ENCODE measurements at regions of chr17 and their contacts with region 1.

Region 1: GRCh38 chr17:8156246-8156992 is 4.2 kb upstream of the PER1 start:
- DNase-seq: peak; percentile 100
- H3K4me3 ChIP-seq: peak overlapping the region in 2 of 3 experiments; percentile 24 to 62
- H3K27ac ChIP-seq: peak overlapping the region; percentile 99
- H3K4me1 ChIP-seq: peaks cover 43% of the 10 kb centered on the region
- H3K27me3 ChIP-seq: no peaks in the 10 kb centered on the region
- CTCF ChIP-seq: no peak
- POLR2A ChIP-seq: no peak

Region 2: GRCh38 chr17:7851438-7852256 is 304.8 kb before region 1 on chr17:
- CTCF ChIA-PET with region 1: no interaction called
- POLR2A ChIA-PET with region 1: no interaction called
- dilution Hi-C with region 1: no loop called
- intact Hi-C with region 1: no loop called
- DNase-seq: peak; percentile 88
- H3K4me3 ChIP-seq: no peak overlapping the region
- H3K27ac ChIP-seq: no peak overlapping the region
- H3K4me1 ChIP-seq: peaks cover 20% of the 10 kb centered on the region
- H3K27me3 ChIP-seq: no peaks in the 10 kb centered on the region
- CTCF ChIP-seq: peak; percentile 91 to 98
- POLR2A ChIP-seq: no peak

Region 3: DNA sequence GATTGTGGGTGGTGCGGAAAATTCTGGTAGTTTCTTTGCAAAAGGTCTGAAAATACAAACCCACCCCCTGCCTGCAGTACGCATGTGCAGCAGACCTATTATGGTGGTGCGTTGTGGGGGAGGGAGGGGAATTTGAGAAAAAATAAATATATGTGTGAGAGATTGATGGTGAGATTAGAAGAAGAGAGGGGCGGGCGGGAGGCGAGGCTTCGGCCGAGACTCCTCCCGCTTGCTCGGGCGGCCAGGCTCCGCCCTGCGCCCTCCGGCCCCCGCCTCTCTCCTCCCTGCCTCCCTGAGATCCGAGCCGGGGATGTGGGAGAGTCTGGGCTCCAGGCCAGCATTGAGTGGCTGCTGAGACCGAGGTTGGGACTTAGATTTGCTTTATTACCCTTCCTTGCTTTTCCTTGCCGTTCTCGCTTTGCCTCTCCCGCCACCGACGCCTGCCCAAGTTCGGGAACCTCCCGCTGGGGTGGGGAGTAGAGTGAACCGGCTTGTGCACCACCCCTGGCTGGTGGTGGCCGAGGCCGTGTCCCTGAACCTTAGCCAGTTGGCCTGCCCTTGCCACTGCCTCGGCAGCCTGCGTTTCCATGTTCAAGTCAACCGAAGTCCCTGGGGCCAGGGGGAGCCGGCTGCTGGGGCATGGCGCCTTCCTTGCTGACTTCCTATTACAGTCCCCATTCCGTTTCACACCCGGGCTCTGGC is 268.8 kb before region 1 on chr17:
- CTCF ChIA-PET with region 1: no interaction called
- POLR2A ChIA-PET with region 1: no interaction called
- dilution Hi-C with region 1: no loop called
- intact Hi-C with region 1: loop called (anchors 1 kb)
- DNase-seq: peak; percentile 100
- H3K4me3 ChIP-seq: peak overlapping the region in 2 of 3 experiments; percentile 50 to 76
- H3K27ac ChIP-seq: peak overlapping the region; percentile 94
- H3K4me1 ChIP-seq: peaks cover 42% of the 10 kb centered on the region
- H3K27me3 ChIP-seq: no peaks in the 10 kb centered on the region
- CTCF ChIP-seq: no peak
- POLR2A ChIP-seq: peak; percentile 74

Region 4: DNA sequence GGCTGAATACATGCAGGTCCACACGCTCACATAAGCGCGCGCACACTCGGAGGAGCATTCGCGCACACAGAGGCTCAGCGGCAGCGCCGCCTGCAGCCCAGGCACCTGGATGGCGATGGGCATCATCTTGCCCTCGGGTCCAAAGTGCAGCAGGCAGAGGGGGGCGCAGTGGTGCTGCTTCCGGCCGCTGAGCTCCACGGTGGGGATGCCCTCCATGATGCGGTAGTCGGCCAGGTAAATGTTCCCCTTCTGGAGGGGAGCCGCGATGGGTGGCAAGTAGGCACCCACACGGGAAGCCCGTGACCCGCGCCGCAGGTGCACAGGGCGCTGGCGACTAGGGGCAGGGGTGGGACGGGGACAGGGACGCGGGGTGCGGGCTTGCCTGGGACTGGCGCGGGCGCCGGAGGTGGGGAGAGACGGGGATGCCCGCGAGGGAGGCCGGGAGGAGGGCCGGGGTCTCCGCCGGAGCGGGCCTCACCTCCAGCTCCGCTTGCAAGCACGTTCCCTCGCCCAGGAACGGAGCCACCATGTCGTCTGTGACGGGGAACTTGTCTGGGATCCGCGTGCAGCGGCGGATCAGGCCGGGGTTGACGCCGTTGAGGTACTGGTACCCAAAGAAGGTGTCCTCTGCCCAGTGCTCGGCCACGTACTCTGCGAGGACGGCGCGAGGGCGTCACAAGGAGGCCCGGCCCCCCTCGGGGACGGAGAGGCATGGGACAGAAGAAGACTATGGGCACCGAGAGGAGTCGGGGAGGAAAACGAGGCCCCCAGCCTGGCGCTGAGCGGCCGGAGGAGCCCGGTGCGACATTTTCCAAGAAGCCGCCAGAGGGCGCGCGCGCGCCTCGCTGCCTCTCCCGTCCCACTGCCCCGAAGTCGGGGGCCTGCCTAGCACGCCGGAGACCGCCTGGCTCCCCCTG is 76.9 kb before region 1 on chr17:
- CTCF ChIA-PET with region 1: interaction called, 9 read pairs
- POLR2A ChIA-PET with region 1: no interaction called
- dilution Hi-C with region 1: no loop called
- intact Hi-C with region 1: loop called (anchors 1 kb)
- DNase-seq: peak; percentile 46
- H3K4me3 ChIP-seq: peak overlapping the region in 2 of 3 experiments; percentile 20 to 32
- H3K27ac ChIP-seq: no peak overlapping the region
- H3K4me1 ChIP-seq: peaks cover 6% of the 10 kb centered on the region
- H3K27me3 ChIP-seq: peaks cover 17 to 23% of the 10 kb centered on the region in 2 experiments
- CTCF ChIP-seq: peak; percentile 83 to 91
- POLR2A ChIP-seq: no peak

Region 5: DNA sequence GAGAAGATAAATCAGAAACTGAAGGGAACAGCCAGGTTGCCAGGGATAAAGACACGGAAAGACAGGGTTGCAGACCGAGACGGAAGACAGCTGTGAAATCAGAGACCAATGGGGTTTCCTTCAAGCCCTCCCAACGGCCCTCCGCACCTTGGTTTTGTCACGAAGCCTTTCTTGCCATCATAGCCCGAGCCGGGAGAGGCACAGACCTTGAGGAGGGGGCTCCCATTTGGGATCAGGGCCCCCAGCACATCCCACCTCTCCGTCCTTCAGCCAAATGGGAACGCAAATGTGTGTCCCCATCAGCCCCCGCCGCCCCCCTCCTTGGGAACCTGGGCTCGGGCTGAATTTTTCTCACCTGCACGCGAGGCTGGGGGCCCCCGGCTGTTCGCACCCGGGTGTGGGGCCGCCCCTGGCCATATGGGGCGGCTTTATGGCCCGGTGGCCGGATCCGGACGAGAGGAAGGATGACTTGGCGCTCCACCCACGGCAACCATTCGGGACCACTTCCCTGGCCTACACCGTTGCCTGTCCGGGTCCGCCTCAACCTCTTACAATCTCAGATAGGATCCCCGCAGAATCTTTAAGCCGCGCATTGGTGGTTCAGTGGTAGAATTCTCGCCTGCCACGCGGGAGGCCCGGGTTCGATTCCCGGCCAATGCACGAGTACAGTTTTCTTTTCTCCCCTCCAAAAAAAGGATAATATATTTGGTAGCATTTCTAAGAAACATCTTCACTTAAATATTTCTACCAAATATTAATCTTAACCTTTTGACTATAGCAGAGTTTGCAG is 31.1 kb before region 1 on chr17:
- CTCF ChIA-PET with region 1: interaction called, 10 read pairs
- POLR2A ChIA-PET with region 1: no interaction called
- dilution Hi-C with region 1: no loop called
- intact Hi-C with region 1: loop called (anchors 1 kb)
- DNase-seq: peak; percentile 71
- H3K4me3 ChIP-seq: peak overlapping the region; percentile 46 to 98 (median 85)
- H3K27ac ChIP-seq: no peak overlapping the region
- H3K4me1 ChIP-seq: peaks cover 30% of the 10 kb centered on the region
- H3K27me3 ChIP-seq: peaks cover 8 to 14% of the 10 kb centered on the region in 2 experiments
- CTCF ChIP-seq: no peak
- POLR2A ChIP-seq: no peak

Region 6: DNA sequence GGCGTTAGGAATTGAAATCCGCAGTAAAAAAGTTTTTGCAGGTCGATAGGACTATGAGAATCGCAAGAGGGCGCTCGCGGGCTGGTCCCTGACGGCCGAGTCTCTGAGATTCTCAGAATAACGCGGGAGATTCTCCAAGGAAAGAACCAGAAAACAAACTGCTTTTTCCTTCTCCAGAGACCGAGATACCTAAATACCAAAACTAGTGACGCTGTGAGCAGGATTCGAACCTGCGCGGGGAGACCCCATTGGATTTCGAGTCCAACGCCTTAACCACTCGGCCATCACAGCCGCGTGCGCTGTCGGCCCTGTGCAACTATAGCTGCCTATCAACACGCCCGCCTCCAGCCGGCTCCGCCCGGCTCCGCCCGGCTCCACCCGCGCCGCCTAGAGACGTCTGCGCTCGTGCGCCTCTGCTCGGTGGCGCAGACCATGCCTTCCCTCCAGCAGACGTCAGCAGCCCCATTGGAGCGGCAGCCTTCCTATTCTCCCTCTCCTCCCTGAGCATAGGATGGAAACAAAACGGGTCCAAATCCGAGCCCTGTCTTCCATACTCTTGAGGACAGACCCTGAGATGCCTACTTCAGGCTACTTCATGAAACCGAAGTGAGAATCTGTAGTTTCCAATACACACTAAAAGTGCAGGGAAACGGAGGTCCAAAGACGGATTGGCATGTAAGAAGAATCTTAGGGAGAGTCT is 17.6 kb before region 1 on chr17:
- CTCF ChIA-PET with region 1: interaction called, 72 read pairs
- POLR2A ChIA-PET with region 1: interaction called, 5 read pairs
- dilution Hi-C with region 1: no loop called
- intact Hi-C with region 1: loop called (anchors 1 kb)
- DNase-seq: peak; percentile 98
- H3K4me3 ChIP-seq: peak overlapping the region; percentile 26 to 89 (median 80)
- H3K27ac ChIP-seq: peak overlapping the region; percentile 88
- H3K4me1 ChIP-seq: peaks cover 14% of the 10 kb centered on the region
- H3K27me3 ChIP-seq: no peaks in the 10 kb centered on the region
- CTCF ChIP-seq: peak; percentile 83 to 91
- POLR2A ChIP-seq: no peak

Region 7: DNA sequence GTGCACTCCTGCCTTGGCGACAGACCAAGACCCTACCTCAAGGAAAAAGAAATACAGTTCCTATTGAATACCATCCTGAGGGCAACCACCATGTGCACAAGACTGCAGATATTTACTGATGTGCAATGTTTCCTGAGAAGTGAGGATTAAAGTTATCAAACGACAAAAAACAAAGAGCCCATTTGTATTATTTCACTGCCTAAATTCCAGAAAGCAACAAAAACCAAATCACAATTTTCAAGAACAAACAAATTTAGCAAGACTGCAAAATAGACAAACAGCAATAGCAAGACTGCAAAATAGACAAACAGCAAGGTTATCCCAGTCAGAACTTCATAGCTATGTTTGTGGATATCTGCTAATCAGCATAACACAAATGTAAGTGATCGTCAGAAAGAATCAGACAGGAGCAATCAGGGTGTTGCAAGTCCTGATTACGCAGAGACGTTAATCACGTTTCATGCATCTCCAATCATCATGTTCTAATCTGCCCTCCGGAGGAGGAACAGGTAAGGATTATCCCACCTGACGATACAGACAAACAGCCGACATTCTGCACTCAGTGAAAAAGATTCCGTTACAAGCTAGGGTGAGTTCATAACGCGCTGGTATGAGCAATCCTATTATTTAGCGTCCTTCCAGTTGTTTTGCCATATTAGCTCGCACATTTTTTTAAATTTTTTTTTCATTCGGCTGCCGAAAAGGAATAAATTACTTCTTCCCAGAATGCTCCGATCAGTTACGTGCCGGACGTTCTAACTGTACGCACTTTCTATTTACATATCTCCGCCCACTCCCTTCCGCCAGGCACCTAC is 16.8 kb after region 1 on chr17:
- CTCF ChIA-PET with region 1: interaction called, 10 read pairs
- POLR2A ChIA-PET with region 1: interaction called, 33 read pairs
- dilution Hi-C with region 1: no loop called
- intact Hi-C with region 1: loop called (anchors 2 kb)
- DNase-seq: peak; percentile 95
- H3K4me3 ChIP-seq: peak overlapping the region in 2 of 3 experiments; percentile 37 to 68
- H3K27ac ChIP-seq: peak overlapping the region; percentile 95
- H3K4me1 ChIP-seq: peaks cover 23% of the 10 kb centered on the region
- H3K27me3 ChIP-seq: no peaks in the 10 kb centered on the region
- CTCF ChIP-seq: no peak
- POLR2A ChIP-seq: peak; percentile 100

Region 8: DNA sequence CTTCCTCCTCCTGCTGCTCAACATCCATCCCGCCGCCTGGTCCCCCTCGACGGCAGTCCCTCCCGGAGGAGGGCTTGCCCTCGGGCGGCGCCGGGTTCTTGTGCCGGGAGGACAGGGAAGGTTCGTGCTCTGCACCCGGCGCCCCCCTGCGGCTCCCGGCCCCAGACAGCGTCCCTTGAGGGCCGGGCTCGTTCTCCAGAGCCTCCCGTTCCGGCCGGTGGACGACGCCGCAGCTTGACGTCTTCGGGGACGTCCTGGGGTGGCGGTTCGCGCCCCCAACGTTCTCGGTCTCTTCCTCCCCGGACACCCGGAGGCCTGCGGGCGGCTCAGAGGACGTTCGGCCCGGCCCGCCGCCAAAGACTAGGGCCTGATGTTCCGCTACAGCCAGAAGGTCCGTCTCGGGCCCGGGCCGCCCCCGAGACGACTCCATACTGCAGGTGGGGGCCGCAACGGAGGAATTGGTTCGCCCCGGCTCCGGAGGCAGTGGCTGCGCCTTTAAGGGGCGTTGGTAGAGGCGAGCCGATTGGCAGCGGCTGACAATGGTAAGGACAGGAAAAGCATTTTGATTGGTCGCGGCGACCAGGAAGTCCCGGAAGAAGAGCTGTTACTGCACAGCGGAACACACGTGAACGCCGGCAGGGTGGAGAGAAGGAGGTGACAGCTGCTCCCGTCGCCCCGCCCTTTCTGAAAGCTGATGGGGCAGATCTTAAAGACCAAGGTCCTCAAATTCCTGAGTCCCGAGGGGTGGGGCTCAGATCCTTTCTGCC is 33.5 kb after region 1 on chr17 and contains the start of gene BORCS6:
- CTCF ChIA-PET with region 1: interaction called, 3 read pairs
- POLR2A ChIA-PET with region 1: no interaction called
- dilution Hi-C with region 1: no loop called
- intact Hi-C with region 1: loop called (anchors 2 kb)
- DNase-seq: peak; percentile 98
- H3K4me3 ChIP-seq: peak within 1 kb of the TSS; percentile 45 to 66 (median 49)
- H3K27ac ChIP-seq: peak within 1 kb of the TSS; percentile 65
- H3K4me1 ChIP-seq: peaks cover 27% of the 10 kb centered on the region
- H3K27me3 ChIP-seq: no peaks in the 10 kb centered on the region
- CTCF ChIP-seq: peak in 1 of 2 donors; percentile 5
- POLR2A ChIP-seq: no peak
- total RNA-seq, gene BORCS6: 8.3 and 9.0 TPM in 2 replicates